ENCODE measurements at regions of chr17 and their contacts with region 1.

Region 1: GRCh38 chr17:60577147-60577915 is 22.7 kb upstream of the PPM1D start:
- DNase-seq: no peak

Region 2: GRCh38 chr17:60563746-60564145 is 13.6 kb before region 1 on chr17:
- intact Hi-C with region 1: no loop called
- DNase-seq: no peak

Region 3: GRCh38 chr17:60599620-60600489 is 22.5 kb after region 1 on chr17 and contains the start of gene PPM1D:
- intact Hi-C with region 1: loop called in 1 of 2 experiments (anchors 1 kb)
- DNase-seq: peak; percentile 100
- total RNA-seq, gene PPM1D: 9.1 to 11.5 TPM

Region 4: GRCh38 chr17:60630352-60630751 is 53.0 kb after region 1 on chr17:
- intact Hi-C with region 1: loop called in 1 of 2 experiments (anchors 10 kb)
- DNase-seq: no peak